PC-9 (cell line): ENCODE measurements at regions of chr16 and their contacts with region 1.

Region 1: DNA sequence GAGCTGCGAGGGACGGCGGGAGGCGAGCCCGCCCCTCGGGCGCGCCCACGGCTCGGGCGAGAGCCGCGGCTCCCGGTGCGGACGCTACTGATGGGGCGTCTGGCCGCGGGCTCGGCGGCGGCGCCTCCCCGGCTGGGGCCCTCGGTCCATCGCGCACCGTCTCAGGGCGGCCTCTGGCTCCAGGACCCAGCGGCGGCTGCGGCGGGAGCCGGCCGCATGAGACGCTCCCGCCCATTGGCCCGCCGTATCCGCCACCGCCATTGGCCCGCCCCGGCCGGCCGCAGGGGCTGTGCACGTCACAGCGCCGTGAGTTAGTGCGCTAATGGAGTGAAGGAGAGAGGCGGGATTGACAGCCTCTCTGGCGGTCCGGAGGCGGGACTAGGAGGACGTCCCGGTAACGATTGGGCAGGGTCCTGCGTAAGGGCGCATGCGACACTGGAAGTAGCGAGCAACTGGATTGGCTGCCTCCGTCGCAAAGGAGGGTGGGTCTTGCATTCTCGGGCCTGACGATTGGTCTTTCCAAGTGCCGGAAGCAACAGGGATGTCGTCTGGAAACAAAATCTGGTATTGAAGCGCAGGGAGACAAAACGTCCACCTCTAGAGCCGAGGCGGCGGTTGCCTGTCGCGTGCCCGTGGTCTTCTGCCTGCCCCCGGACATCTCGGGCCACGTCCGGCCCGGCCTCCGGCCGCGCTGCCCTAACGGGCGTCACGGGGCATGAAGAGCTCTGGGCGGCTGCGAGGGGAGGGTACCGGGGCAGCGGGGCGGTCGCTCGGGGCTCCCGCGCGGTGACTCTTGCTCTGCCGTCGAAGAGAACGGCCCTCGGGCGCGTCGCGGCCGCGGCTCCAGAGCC is at the start of gene ANKRD11:
- DNase-seq: peak; percentile 98 to 100
- H3K4me3 ChIP-seq: peak within 1 kb of the TSS; percentile 91
- H3K27ac ChIP-seq: peak within 1 kb of the TSS; percentile 53
- H3K4me1 ChIP-seq: peaks cover 30% of the 10 kb centered on the region
- H3K27me3 ChIP-seq: no peaks in the 10 kb centered on the region
- CTCF ChIP-seq: no peak
- total RNA-seq, gene ANKRD11: 206 and 220 TPM in 2 replicates

Region 2: GRCh38 chr16:89363621-89364393 is 126.8 kb before region 1 on chr16:
- CTCF ChIA-PET with region 1: no interaction called
- POLR2A ChIA-PET with region 1: no interaction called
- intact Hi-C with region 1: loop called (anchors 2 kb)
- DNase-seq: peak; percentile 74 to 77
- H3K4me3 ChIP-seq: no peak overlapping the region
- H3K27ac ChIP-seq: peak overlapping the region; percentile 30; the same call in 1 of the 2 replicates
- H3K4me1 ChIP-seq: peaks cover 31% of the 10 kb centered on the region
- H3K27me3 ChIP-seq: no peaks in the 10 kb centered on the region
- CTCF ChIP-seq: no peak

Region 3: DNA sequence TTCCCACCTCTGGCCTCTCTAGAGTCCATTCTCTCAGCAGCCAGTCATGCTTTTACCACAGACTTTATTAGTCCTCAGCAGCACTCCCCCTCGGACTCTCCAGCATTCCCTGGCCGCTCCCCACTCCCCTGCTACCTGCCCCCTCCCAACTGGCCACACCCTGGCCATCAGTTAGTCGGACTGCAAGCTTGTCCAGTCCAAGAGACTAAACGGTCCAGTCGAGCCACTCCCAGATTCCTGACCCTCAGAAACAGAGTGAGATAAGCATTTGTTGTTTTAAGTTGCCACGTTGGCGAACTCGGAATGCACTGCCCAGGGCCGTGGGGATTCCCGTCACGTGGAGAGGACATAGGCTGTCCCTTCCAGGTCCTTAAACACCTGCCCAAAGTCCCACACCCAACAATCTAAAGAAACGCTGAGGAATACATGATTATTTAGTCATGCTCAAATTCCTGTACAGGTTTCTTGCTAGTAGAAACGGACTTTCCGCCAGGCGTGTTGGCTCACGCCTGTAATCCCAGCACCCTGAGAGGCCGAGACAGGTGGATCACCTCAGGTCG is 11.8 kb after region 1 on chr16:
- CTCF ChIA-PET with region 1: interaction called, 18 read pairs
- POLR2A ChIA-PET with region 1: interaction called, 7 read pairs
- intact Hi-C with region 1: loop called (anchors 1 kb)
- DNase-seq: peak; percentile 96 to 99
- H3K4me3 ChIP-seq: no peak overlapping the region; the same call in 1 of the 2 replicates
- H3K27ac ChIP-seq: peak overlapping the region; percentile 77
- H3K4me1 ChIP-seq: peaks cover 48% of the 10 kb centered on the region
- H3K27me3 ChIP-seq: no peaks in the 10 kb centered on the region
- CTCF ChIP-seq: no peak

Region 4: DNA sequence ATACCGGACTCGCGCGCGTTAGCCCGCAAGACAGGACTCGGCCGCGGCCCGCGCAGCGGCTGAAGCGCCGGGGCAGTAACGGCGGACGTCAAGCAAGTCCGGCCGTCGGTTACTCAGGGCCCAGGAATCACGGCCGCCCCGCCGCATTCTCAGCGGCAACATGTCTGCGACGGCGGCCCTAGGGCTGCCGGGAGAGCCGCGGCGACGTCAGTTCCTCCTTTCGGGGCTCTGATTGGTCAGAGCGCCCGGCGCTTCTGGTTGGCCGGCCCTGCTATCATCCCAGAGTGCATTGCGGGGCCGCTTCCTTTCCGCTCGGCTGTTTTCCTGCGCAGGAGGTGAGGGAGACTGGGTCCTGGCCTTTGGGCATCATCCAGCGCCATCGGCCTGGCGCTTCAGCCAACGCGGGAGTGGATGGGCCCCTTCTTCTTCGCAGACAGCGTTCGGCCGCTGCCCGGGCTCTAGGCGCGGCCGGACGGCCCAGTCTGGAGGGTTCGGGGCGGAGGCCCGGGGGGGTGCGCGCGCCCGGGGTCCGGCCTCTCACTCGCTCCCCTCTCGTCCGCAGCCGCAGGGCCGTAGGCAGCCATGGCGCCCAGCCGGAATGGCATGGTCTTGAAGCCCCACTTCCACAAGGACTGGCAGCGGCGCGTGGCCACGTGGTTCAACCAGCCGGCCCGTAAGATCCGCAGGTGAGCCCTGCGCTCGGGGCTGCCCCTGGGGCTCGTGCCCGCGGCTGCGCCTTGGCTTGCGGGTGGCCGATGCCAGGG is 69.9 kb after region 1 on chr16 and contains the start of gene RPL13:
- CTCF ChIA-PET with region 1: no interaction called
- POLR2A ChIA-PET with region 1: no interaction called
- intact Hi-C with region 1: loop called (anchors 5 kb)
- DNase-seq: peak; percentile 91 to 95
- H3K4me3 ChIP-seq: peak within 1 kb of the TSS; percentile 92
- H3K27ac ChIP-seq: peak within 1 kb of the TSS; percentile 96
- H3K4me1 ChIP-seq: peaks cover 49% of the 10 kb centered on the region
- H3K27me3 ChIP-seq: no peaks in the 10 kb centered on the region
- CTCF ChIP-seq: no peak
- total RNA-seq, gene RPL13: 2,045 and 3,124 TPM in 2 replicates